Left colon (tissue), 2 donors: ENCODE measurements at regions of chr12 and their contacts with region 1.

Region 1: DNA sequence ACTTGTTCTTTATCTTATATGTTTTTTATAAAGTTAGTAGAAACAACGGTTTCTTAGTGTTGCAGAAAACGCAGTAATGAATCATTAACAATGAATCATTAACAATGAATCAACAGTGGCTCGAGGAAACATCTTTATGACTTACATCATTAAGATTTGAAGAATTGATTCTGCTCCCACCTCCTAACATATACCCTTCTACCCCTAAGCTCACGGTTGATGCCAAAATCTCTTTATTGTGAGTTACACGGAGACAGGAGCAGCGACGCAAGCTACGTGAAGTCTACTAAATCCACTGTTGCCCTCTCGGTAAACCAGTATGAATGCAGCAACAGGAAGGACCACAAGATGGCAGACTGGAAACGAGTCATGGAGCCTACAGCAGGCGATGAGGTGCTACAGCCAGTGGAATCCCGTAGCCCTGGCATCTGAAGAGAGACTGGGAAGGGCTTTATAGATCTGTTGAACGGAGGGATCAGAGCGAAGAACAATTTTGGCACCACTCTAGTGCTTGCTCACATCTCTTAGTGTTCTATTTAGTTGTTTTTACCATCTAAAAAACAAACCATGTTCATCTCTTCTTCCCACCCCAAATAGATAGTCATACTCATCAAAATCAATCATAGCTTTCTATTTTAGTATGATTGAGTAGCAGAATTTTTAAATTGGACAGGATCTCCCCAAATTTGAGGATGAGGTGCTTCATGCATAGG is 332.7 kb downstream of the DUSP6 start:
- DNase-seq: peak; percentile 75 to 79
- ATAC-seq: peak; percentile 95

Region 2: DNA sequence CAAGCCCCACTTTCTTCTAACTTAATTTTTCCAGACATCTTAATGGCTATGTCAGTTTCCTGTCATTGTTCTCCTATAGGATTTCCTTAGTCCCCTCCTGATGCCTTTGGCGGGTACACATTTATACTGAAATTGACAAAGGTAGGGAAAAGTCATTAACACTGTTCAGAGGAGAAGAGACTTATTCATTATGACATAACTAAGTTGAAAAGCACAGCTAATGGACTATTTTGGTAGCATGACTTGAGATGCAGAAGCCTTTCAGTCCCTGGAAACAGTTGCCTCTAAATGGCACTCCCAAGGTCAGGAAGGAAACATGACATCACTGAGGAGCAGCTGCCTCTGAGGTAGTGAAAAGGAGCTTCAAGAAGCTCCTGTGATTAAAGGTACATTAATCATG is 121.8 kb before region 1 on chr12:
- intact Hi-C with region 1: no loop called
- DNase-seq: no peak
- ATAC-seq: no peak

Region 3: GRCh38 chr12:89461649-89462612 is 442.4 kb after region 1 on chr12:
- intact Hi-C with region 1: loop called in 1 of 2 experiments (anchors 2 kb)
- DNase-seq: no peak
- ATAC-seq: peak; percentile 85

Region 4: DNA sequence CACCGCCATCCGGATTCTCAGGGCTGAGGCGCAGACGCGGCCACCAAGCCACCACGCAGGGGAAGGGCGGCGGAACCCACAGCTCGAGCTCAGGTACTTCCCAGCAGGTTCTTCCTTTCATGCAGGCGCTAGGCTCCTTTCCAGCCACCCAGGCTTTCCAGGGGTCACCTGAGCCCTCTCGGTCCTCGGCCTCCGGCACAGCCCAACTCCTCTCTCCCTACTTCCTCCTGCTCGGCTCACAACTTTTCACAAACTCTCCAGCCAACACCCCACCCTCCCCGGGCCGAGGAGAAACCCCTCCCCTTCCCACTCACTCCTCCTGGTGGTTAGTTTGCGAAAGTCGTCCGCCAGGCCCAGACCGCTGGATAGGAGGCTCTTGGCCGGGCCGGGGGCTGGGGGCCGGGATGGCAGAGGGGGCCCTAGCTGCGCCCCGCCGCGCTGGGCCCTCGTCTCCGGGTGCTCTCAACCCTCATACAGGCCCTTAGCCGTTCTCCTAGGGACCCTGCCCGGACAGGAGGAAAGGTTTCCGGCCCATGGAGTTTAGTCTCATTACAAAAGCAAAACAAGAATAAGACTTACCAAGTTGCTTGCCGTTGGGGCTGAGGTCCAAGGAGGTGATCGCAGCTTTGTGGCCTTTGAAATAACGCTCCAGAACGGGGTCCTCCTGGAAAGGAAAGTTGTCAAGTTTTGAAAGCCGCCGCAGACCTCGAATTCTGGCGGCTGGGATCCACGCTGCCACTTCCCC is 505.1 kb after region 1 on chr12 and contains the start of gene GALNT4:
- intact Hi-C with region 1: loop called (anchors 5 to 10 kb)
- DNase-seq: peak; percentile 92 to 93
- ATAC-seq: peak; percentile 83
- total RNA-seq, gene GALNT4: 47.4 to 57.1 TPM